ENCODE measurements at regions of chr6 and their contacts with region 1.

Region 1: DNA sequence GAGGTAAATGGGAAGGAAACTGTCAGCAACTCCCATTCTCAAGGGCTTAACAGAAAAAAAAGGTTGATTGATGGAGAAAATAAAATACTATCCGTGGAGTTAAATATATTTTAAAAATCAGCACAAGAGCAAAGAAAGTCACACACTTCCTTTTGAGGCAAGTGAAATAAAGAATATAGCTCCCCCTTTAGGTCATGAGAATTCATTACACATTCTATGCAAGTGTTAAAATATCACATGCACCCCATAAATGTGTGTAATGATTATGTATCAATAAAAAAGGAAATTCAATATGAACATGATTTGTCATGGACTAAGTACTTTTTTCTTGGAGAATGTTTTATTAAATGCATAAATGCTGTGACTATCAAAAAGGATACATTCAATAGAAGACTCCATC is 349.2 kb downstream of the TPBG start:
- H3K4me3 ChIP-seq: no peak overlapping the region
- H3K27ac ChIP-seq: no peak overlapping the region
- H3K4me1 ChIP-seq: no peaks in the 10 kb centered on the region
- CTCF ChIP-seq: no peak

Region 2: GRCh38 chr6:82735790-82736189 is 22.9 kb after region 1 on chr6:
- CTCF ChIA-PET with region 1: interaction called, 12 read pairs
- POLR2A ChIA-PET with region 1: no interaction called
- H3K4me3 ChIP-seq: no peak overlapping the region
- H3K27ac ChIP-seq: no peak overlapping the region
- H3K4me1 ChIP-seq: peaks cover 9% of the 10 kb centered on the region; the same call in 1 of the 2 replicates
- CTCF ChIP-seq: no peak

Region 3: GRCh38 chr6:83114164-83114563 is 401.3 kb after region 1 on chr6:
- CTCF ChIA-PET with region 1: no interaction called
- POLR2A ChIA-PET with region 1: no interaction called
- H3K4me3 ChIP-seq: no peak overlapping the region
- H3K27ac ChIP-seq: no peak overlapping the region
- H3K4me1 ChIP-seq: peaks cover 2% of the 10 kb centered on the region; the same call in 1 of the 2 replicates
- CTCF ChIP-seq: no peak

Measured in HEK293 (cell line).